Breast epithelium (tissue), 4 donors: ENCODE measurements at regions of chr22 and their contacts with region 1.

Region 1: GRCh38 chr22:26502688-26503561 is 9.3 kb downstream of the TFIP11 start:
- DNase-seq: no peak
- H3K4me3 ChIP-seq: no peak overlapping the region
- H3K27ac ChIP-seq: peak overlapping the region in 1 of 2 donors; percentile 9
- H3K4me1 ChIP-seq: no peaks in the 10 kb centered on the region
- H3K27me3 ChIP-seq: no peaks in the 10 kb centered on the region
- CTCF ChIP-seq: peak in 1 of 3 donors; percentile 45
- POLR2A ChIP-seq: no peak

Region 2: GRCh38 chr22:24996420-24996952 is 1506.4 kb before region 1 on chr22:
- intact Hi-C with region 1: no loop called
- DNase-seq: peak in 1 of 2 donors; percentile 54
- H3K4me3 ChIP-seq: no peak overlapping the region
- H3K27ac ChIP-seq: peak overlapping the region; percentile 33 to 48
- H3K4me1 ChIP-seq: peaks cover 0 to 6% of the 10 kb centered on the region in 2 donors
- H3K27me3 ChIP-seq: no peaks in the 10 kb centered on the region
- CTCF ChIP-seq: no peak
- POLR2A ChIP-seq: no peak

Region 3: GRCh38 chr22:26651815-26652214 is 148.9 kb after region 1 on chr22:
- intact Hi-C with region 1: loop called (anchors 1 kb)
- DNase-seq: no peak
- H3K4me3 ChIP-seq: no peak overlapping the region
- H3K27ac ChIP-seq: no peak overlapping the region
- H3K4me1 ChIP-seq: no peaks in the 10 kb centered on the region
- H3K27me3 ChIP-seq: peaks cover 0 to 39% of the 10 kb centered on the region in 2 donors
- CTCF ChIP-seq: no peak
- POLR2A ChIP-seq: no peak

Region 4: DNA sequence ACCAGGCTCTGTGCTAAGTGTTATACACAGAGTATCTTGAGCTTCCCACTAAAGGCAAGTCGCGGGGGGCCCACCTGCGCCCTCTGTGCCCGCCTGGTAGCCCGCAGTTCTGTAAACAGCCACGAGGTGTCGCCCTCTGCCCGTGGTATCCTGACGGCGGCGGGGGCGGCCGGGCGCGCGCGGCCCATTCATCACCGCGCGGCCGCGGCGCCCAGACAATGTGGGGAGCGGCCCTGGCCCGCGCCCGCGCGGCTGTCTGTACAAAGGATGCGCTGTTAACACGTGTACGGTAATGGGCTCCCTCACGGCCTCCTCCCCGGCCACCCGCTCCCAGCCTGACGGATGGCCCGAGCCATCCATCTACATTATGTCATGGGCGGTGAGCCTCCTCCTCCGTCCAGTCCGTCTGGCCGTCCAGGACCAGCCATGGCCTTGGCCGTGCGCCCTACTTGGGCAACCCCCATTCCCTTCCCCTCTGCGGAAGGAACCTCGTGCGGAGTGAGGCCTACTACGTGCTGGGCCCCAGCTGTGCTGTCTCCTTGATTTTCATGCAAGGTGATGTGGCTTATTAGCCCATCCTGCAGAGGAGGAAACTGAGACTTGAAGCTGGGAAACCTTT is 253.9 kb after region 1 on chr22:
- intact Hi-C with region 1: no loop called
- DNase-seq: peak; percentile 21 to 62
- H3K4me3 ChIP-seq: peak overlapping the region; percentile 11 to 48 (median 28)
- H3K27ac ChIP-seq: no peak overlapping the region
- H3K4me1 ChIP-seq: no peaks in the 10 kb centered on the region
- H3K27me3 ChIP-seq: no peaks in the 10 kb centered on the region
- CTCF ChIP-seq: peak in 2 of 3 donors; percentile 54 to 95
- POLR2A ChIP-seq: no peak

Region 5: DNA sequence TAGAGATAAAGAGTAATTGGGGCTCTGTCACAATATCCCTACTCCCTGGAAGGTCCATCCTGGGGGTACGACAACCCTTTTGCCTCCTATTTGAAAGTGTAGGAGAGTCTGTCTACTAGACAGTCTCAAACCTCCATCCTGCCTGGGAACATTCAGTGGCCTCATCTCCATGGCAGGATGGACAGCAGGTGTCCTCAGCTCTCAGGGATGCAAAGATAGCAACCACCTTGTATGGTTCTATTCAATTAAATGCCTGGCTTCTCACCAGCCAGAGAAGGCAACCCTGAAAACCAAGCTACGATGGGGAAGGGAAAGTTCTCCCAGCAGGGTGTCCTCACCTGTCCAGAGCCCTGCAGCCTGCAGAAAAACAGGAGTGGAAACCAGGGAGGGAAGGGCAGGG is 319.4 kb after region 1 on chr22:
- intact Hi-C with region 1: no loop called
- DNase-seq: no peak
- H3K4me3 ChIP-seq: no peak overlapping the region
- H3K27ac ChIP-seq: no peak overlapping the region
- H3K4me1 ChIP-seq: no peaks in the 10 kb centered on the region
- H3K27me3 ChIP-seq: no peaks in the 10 kb centered on the region
- CTCF ChIP-seq: no peak
- POLR2A ChIP-seq: no peak